Right cardiac atrium (tissue), 5 donors: ENCODE measurements at regions of chr3 and their contacts with region 1.

Region 1: DNA sequence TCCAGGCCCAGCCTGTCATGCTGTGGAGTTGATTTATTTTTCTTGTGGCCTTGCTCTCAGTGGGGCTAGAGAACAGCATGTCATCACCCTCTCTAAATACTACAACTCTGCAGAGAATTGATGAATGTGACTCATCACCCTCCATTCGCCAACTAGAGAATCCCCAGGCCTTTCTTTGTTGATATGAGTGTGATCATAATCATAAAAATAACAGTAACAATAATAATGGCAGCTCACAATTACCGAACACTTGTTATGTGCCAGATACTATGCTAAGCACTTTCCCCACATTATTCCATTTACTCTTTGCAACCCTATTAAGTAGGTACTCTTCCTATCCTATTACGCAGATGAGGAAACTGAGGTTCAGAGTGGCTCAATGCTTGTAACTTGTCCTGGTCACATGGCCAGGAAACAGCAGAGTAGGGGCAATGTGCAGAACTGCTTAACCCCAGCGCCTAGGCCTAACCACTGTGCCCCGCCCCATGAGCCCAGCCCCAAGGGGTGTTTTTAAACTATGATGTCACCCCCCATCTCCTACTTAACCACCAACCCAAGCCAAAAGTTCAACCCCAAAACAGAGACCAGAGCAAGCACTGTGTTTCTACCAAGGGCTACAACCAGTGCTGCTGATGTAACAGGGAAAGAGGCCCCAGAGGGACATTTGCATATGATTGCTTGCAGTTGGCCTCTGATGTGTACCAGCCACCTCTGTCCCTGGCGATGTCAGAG is 104.5 kb downstream of the ADCY5 start:
- DNase-seq: no peak
- ATAC-seq: peak; percentile 6 to 22
- H3K4me3 ChIP-seq: no peak overlapping the region
- H3K27ac ChIP-seq: peak overlapping the region; percentile 68
- H3K4me1 ChIP-seq: peaks cover 15% of the 10 kb centered on the region
- H3K27me3 ChIP-seq: no peaks in the 10 kb centered on the region

Region 2: GRCh38 chr3:123406598-123406997 is 62.3 kb after region 1 on chr3:
- intact Hi-C with region 1: loop called in 1 of 4 experiments (anchors 10 kb)
- DNase-seq: peak; percentile 82 to 90 (median 90)
- ATAC-seq: peak; percentile 81 to 83
- H3K4me3 ChIP-seq: no peak overlapping the region
- H3K27ac ChIP-seq: peak overlapping the region; percentile 98
- H3K4me1 ChIP-seq: peaks cover 22% of the 10 kb centered on the region
- H3K27me3 ChIP-seq: no peaks in the 10 kb centered on the region